ENCODE measurements at regions of chr3 and their contacts with region 1.

Region 1: DNA sequence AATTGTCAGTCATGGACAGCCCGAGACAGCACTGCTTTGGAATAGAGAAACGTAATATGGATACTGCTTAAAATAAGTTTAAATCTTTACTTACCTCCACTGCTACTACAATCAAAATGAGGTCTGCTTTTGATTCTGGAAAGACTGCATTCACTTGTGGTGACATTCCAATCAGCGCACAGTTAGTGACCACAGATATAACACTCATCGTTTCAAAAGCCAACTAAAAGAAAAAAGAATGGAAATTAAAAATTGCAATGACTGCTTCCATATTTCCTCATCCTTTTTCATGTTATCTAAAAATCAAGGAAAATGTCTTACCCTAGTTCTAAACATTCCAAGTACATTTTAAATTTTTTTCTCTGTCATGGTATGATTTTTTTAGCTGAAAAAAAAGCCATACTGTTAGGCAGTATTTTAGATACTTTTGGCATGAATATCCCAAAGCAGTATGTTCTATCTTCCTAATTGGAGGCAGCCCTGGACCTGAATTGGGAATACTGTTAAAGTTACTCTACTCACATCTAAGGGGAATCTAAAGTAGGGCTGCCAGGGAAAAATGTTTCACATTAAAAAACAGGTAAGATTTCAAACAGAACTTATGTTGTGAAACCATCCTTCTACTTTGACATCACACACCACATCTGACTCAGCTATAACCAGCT is 72.1 kb downstream of the ANO10 start:
- DNase-seq: no peak
- ATAC-seq: no peak
- H3K4me3 ChIP-seq: no peak overlapping the region
- H3K27ac ChIP-seq: no peak overlapping the region
- H3K4me1 ChIP-seq: no peaks in the 10 kb centered on the region
- H3K27me3 ChIP-seq: no peaks in the 10 kb centered on the region
- CTCF ChIP-seq: no peak
- EP300 ChIP-seq: no peak
- POLR2A ChIP-seq: no peak
- RAD21 ChIP-seq: no peak

Region 2: GRCh38 chr3:43759297-43759782 is 209.6 kb after region 1 on chr3:
- CTCF ChIA-PET with region 1: no interaction called
- POLR2A ChIA-PET with region 1: no interaction called
- in situ Hi-C with region 1: loop called (anchors 5 kb)
- intact Hi-C with region 1: loop called (anchors 1 kb)
- DNase-seq: peak; percentile 56
- ATAC-seq: peak; percentile 92
- H3K4me3 ChIP-seq: peak overlapping the region in 1 of 3 experiments; percentile 35; a peak in 1 of 6 replicates
- H3K27ac ChIP-seq: no peak overlapping the region
- H3K4me1 ChIP-seq: peaks cover 19% of the 10 kb centered on the region; the same call in 1 of the 2 replicates
- H3K27me3 ChIP-seq: no peaks in the 10 kb centered on the region
- CTCF ChIP-seq: peak; percentile 72
- EP300 ChIP-seq: no peak
- POLR2A ChIP-seq: no peak
- RAD21 ChIP-seq: 0 out of 2 replicates have a peak, but pooled peaks have one; percentile 8

Measured in HepG2 (cell line).